ENCODE measurements at regions of chr6 and their contacts with region 1.

Region 1: GRCh38 chr6:90478789-90479602 is 107.9 kb downstream of the MAP3K7 start:
- DNase-seq: peak; percentile 83
- ATAC-seq: peak; percentile 99
- H3K4me3 ChIP-seq: no peak overlapping the region
- H3K27ac ChIP-seq: no peak overlapping the region
- H3K4me1 ChIP-seq: peaks cover 4% of the 10 kb centered on the region; the same call in 1 of the 2 replicates
- H3K27me3 ChIP-seq: peaks cover 0 to 23% of the 10 kb centered on the region in 2 experiments; a peak in 2 of 5 replicates
- CTCF ChIP-seq: peak; percentile 92
- EP300 ChIP-seq: no peak
- POLR2A ChIP-seq: no peak
- RAD21 ChIP-seq: peak; percentile 86

Region 2: DNA sequence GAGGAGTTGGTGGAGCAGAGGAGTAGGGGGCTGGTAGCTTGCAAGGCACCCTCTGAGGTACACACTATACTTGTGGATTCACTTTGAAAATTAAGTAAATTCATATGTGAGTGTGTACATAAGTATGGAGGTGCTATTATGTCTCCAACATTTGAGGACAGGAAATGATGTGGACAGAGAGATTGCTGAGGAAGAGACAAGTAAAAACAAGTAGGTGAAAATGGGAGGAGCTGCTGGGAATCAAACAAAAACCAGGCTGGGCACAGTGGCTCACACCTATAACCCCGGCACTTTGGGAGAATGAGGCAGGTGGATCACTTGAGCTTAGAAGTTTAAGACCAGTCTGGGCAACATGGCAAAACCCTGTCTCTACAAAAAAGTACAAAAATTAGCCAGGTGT is 771.2 kb before region 1 on chr6:
- CTCF ChIA-PET with region 1: no interaction called
- POLR2A ChIA-PET with region 1: no interaction called
- in situ Hi-C with region 1: no loop called
- intact Hi-C with region 1: no loop called
- DNase-seq: no peak
- ATAC-seq: no peak
- H3K4me3 ChIP-seq: no peak overlapping the region
- H3K27ac ChIP-seq: no peak overlapping the region
- H3K4me1 ChIP-seq: peaks cover 15% of the 10 kb centered on the region
- H3K27me3 ChIP-seq: no peaks in the 10 kb centered on the region
- CTCF ChIP-seq: no peak
- EP300 ChIP-seq: no peak
- POLR2A ChIP-seq: no peak
- RAD21 ChIP-seq: no peak

Region 3: DNA sequence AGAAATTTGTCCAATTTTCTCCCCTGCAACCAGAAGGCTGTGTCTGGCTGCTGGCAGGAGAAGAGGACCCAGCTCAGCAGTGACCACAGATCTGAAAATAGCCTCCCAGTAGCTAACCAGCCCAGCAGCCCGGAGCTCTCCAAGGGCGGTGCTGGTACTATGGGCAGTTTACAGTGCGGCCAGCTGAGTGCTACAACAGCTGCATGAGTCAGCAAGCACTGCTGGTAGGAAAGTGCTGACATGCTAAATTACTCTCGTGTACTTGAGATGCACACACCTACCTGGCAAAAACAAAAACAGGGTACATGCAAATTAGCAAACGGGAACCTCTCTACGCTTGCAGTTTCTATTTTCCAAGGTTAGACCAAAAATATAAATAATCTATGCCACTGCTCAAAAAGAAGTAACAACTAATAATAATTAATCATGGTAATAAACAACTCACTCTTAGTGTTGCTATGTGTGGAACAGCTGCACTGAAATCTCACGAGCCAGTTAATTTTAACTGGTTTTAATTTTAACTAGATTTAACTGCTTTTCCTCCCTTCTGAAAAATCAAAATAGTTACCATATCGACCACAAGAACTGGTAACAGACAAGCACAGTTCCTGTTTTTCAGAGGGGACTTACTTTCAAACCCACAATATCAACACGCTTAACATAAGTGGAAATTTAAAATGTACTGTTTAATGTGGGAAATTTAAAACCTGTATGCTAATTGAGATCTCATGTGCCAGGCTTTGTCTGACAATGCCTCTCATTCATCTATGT is 193.2 kb before region 1 on chr6:
- CTCF ChIA-PET with region 1: no interaction called
- POLR2A ChIA-PET with region 1: no interaction called
- in situ Hi-C with region 1: loop called (anchors 25 kb)
- intact Hi-C with region 1: loop called (anchors 5 kb)
- DNase-seq: peak; percentile 18
- ATAC-seq: peak; percentile 92
- H3K4me3 ChIP-seq: no peak overlapping the region
- H3K27ac ChIP-seq: no peak overlapping the region
- H3K4me1 ChIP-seq: no peaks in the 10 kb centered on the region
- H3K27me3 ChIP-seq: peaks cover 3 to 16% of the 10 kb centered on the region in 2 experiments; a peak in 3 of 5 replicates
- CTCF ChIP-seq: no peak
- EP300 ChIP-seq: no peak
- POLR2A ChIP-seq: no peak
- RAD21 ChIP-seq: no peak

Region 4: DNA sequence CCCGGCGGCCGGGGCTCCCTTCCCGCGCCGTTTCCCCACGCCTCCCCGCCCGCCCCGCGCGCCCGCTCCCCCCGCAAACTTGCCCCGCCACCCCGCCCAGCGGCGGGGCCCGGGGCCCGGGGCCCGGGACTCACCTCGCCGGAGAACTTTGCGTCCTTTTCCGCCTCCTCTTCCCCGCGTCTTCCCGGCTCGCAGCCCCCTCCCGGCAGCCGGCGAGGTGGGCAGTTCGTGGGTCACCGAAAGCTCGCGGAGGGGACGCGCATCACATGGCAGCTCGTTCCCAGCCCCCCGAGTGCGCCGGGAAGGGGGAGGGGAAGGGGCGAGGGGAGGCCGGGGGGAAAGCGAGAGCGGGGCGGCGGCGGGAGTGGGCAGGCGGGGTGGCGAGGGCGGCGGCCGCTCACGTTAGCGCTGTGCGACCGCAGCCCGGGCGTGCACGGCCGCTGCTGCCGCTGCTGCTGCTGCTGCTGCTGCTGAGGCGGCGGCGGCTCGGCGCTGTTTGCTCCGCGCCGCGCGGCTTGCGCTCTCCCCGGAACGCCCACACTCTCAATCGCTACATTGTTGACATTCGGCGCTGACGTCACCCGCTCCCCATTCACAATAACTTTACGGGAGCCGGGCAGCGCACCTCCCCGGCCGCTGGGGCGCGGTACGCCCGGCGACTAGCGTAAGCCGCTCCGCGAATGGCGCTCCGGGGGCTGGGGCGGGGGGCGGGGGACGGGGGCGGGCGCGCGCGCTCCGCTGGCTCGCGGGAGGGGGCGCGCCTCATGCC is 182.5 kb before region 1 on chr6 and contains the start of gene BACH2:
- CTCF ChIA-PET with region 1: no interaction called
- POLR2A ChIA-PET with region 1: no interaction called
- in situ Hi-C with region 1: loop called (anchors 25 kb)
- intact Hi-C with region 1: loop called (anchors 5 kb)
- DNase-seq: peak; percentile 73
- ATAC-seq: peak; percentile 86
- H3K4me3 ChIP-seq: peak within 1 kb of the TSS; percentile 40 to 61 (median 56); a peak in 4 of 6 replicates
- H3K27ac ChIP-seq: no peak within 1 kb of the TSS
- H3K4me1 ChIP-seq: peaks cover 16% of the 10 kb centered on the region
- H3K27me3 ChIP-seq: peaks cover 8 to 68% of the 10 kb centered on the region in 2 experiments
- CTCF ChIP-seq: no peak
- EP300 ChIP-seq: no peak
- POLR2A ChIP-seq: no peak
- RAD21 ChIP-seq: no peak
- total RNA-seq, gene BACH2: not detected in 2 replicates

Region 5: GRCh38 chr6:90393232-90393884 is 85.6 kb before region 1 on chr6:
- CTCF ChIA-PET with region 1: interaction called, 7 read pairs
- POLR2A ChIA-PET with region 1: no interaction called
- in situ Hi-C with region 1: no loop called
- intact Hi-C with region 1: loop called (anchors 1 kb)
- DNase-seq: peak; percentile 12
- ATAC-seq: peak; percentile 75
- H3K4me3 ChIP-seq: no peak overlapping the region
- H3K27ac ChIP-seq: no peak overlapping the region
- H3K4me1 ChIP-seq: no peaks in the 10 kb centered on the region
- H3K27me3 ChIP-seq: peaks cover 0 to 4% of the 10 kb centered on the region in 2 experiments; a peak in 1 of 5 replicates
- CTCF ChIP-seq: peak; percentile 67
- EP300 ChIP-seq: no peak
- POLR2A ChIP-seq: no peak
- RAD21 ChIP-seq: no peak

Region 6: DNA sequence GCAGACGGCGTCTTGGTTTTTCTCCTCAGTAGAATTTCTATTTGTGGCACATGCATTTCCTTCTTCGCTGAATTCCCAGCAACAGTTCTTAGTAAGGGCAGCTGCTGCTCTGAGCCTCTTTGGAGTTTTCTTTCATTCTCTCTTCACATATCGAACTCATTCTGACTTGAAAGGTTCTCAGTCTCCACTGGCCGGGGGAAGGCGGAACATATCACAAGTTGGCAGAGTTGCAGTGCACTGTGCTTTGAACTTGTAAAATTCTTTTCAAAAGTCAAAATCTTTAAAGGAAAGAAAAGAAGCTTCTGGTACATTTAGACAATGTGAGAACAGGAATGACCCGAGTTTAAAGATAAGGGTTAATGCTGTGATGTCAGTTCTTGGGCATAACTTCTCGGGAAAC is 394.0 kb after region 1 on chr6:
- CTCF ChIA-PET with region 1: no interaction called
- POLR2A ChIA-PET with region 1: no interaction called
- in situ Hi-C with region 1: no loop called
- intact Hi-C with region 1: loop called (anchors 2 kb)
- DNase-seq: no peak
- ATAC-seq: no peak
- H3K4me3 ChIP-seq: no peak overlapping the region
- H3K27ac ChIP-seq: no peak overlapping the region
- H3K4me1 ChIP-seq: no peaks in the 10 kb centered on the region
- H3K27me3 ChIP-seq: peaks cover 0 to 10% of the 10 kb centered on the region in 2 experiments; a peak in 2 of 5 replicates
- CTCF ChIP-seq: no peak
- EP300 ChIP-seq: no peak
- POLR2A ChIP-seq: no peak
- RAD21 ChIP-seq: no peak